ENCODE measurements at regions of chr6 and their contacts with region 1.

Region 1: DNA sequence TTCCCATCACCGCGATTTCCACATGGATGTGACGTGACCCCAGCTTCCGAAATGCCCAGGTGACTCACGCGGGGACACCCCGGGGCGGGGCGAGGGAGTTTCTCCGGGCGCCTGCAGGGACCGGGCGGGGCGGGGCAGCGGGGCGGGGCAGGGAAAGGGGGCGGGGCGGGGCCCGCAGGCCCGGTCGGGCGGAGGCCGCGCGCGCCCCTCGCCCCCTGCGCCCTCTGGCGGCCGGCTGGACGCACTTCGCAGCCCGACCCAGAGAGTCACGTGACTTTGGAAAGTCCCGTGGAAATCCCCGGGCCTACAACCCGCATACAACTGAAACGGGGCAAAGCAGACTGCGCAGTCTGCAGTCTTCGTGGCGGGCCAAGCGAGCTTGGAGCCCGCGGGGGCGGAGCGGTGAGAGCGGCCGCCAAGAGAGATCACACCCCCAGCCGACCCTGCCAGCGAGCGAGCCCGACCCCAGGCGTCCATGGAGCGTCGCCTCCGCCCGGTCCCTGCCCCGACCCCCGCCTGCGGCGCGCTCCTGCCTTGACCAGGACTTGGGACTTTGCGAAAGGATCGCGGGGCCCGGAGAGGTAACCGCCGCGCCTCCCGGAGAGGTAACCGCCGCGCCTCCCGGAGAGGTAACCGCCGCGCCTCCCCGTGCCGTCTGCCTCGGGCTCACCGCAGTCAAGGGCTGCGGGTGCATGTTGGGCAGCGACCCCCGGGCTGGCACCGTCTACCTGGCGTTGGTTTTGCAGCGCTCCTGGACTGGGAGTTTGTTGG is at the start of gene TNFAIP3:
- DNase-seq: peak; percentile 96
- CTCF ChIP-seq: peak; percentile 87

Region 2: DNA sequence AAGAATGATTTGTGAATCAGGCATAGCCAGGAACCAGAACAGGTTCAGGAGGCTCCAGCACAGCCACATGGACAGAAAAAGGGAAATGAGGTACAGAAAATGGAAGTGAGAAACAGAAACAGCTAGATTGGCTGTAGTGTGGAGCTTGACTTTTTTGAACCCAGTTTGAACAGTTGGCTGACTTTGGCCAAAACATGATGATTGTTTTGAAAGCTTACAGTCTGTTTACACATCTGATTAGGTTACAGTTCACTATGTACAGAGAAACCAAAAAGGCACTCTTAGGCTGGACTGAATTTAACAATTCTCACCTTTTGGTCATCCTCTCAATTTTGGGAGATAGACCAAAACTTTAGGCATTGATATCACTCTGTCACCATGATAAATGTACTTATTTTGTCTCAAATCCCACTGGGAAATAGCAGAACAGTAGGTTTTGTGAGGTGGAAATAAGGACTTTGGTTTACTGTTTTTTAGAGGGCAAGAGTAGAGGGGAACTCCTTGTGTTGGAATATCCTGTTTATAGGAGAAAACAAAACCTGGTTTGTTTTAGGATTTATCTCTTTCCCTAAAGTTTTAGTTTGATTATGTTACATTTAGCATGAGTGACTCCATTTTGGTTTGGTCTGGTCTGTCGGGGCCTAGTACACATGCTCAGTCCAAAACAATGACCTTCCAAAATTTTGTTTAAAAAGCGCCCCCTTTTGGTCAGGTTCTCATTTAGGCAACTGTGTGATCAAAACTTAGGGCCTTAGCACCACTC is 496.0 kb before region 1 on chr6:
- CTCF ChIA-PET with region 1: no interaction called
- POLR2A ChIA-PET with region 1: no interaction called
- DNase-seq: peak; percentile 19
- CTCF ChIP-seq: no peak

Region 3: GRCh38 chr6:137465378-137466009 is 401.6 kb before region 1 on chr6:
- CTCF ChIA-PET with region 1: no interaction called
- POLR2A ChIA-PET with region 1: no interaction called
- DNase-seq: no peak
- CTCF ChIP-seq: no peak

Region 4: DNA sequence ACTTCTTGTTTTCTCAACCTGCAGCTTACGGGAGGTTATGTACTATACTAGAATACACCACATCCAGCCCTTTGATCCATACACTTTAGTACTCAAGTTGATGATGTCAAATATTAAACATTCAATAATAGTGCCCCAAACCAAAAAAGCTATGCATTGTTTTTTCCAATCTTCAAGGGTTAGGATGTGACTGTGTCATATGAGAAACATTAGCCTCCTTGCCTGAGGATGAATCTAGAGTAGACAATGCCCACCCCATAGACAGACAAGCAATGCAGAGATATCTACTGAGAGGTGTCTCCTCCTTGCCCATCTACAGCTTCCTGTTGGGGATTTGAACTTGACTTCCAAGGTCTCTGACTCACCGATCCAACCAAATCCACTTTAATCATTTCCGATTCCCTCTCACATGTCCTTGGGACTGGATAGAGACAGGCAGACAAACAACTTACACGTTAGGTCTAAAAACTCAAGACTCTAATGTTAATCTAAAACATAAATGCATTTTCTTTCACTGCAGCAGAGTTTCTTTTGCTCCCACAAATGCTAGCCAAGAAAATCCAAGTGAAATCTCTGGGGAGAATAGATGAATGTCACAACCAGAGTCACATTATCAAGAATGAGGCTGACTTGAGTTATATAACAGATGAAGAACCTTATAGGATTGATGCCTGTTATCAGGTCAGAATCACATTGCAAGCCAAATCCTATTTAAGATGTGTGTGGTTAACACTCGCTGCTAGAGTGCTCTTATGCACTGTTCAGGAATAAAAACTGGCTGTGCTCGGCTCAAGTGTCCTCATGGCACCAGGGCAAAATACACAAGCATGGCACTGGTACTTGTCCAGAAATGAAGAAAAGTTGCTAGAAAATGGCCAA is 75.6 kb before region 1 on chr6:
- CTCF ChIA-PET with region 1: interaction called, 29 read pairs
- POLR2A ChIA-PET with region 1: interaction called, 7 read pairs
- DNase-seq: no peak
- CTCF ChIP-seq: no peak

Region 5: GRCh38 chr6:137827977-137828810 is 38.9 kb before region 1 on chr6:
- CTCF ChIA-PET with region 1: interaction called, 22 read pairs
- POLR2A ChIA-PET with region 1: no interaction called
- DNase-seq: no peak
- CTCF ChIP-seq: no peak

Region 6: DNA sequence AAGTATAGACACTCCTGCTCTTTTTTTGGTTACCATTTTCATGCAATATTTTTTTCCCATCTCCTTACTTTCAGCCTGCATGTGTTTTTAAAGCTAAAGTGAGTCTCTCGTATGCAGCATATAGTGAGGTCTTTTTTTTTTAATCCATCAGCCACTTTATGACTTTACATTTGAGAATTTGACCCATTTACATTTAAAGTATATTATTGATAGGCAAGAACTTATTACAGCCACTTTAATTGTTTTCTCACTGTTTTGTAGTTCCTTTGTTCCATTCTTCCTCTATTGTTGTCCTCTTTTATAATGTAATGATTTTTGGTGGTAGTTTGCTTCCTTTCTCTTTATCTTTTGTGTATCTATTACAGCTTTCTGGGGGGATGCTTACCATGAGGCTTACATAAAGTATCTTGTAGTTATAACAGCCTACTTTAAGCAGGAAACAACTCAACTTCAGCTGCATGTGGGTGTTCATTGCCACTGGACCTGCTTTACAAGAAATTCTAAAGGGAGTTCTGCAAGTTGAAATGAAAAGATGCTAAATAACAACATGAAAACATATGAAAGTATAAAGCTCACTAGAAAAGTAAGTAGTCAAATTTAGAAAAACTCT is 71.8 kb after region 1 on chr6:
- CTCF ChIA-PET with region 1: interaction called, 138 read pairs
- POLR2A ChIA-PET with region 1: interaction called, 10 read pairs
- DNase-seq: no peak
- CTCF ChIP-seq: no peak

Region 7: DNA sequence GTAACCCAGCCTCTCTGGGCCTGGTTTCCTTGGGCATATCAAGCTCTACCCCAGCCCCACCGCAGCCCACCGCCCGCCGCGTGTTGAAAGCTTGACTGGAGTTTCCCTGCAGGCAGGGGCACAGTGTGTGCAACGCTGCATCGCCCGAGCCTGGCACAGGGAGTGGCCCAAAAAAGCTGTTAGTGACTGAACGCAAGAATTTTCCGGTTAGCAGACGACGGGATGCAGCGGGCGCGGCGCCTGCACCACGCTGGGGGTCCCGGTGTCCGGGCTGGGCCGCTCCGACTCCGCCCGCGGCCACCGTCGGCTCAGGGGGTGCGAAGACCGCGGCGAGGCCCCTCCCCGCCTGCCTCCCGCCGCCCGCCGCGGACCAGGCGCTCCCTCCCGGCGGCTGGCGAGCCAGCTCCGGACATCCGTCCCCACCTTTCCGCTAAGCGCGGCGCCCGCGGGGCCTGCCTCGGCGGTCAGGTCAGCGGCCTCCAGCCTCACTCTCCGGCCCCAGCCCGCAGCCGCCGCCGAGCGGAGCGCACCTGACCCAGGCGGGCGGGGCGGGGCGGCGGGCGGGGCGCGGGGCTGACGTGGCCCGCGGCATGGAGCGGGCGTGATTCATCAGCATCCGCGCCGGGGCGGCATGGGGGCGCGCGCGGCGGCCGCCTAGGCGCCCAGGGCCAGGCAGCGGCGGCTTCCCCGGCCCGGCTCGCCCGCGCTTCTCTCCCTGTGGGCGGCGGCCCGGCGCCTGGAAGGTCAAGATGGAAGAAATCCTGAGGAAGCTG is 294.4 kb after region 1 on chr6 and contains the start of gene ARFGEF3:
- CTCF ChIA-PET with region 1: no interaction called
- POLR2A ChIA-PET with region 1: no interaction called
- DNase-seq: peak; percentile 60
- CTCF ChIP-seq: no peak